Calu3 (cell line): ENCODE measurements at regions of chr3 and their contacts with region 1.

Region 1: DNA sequence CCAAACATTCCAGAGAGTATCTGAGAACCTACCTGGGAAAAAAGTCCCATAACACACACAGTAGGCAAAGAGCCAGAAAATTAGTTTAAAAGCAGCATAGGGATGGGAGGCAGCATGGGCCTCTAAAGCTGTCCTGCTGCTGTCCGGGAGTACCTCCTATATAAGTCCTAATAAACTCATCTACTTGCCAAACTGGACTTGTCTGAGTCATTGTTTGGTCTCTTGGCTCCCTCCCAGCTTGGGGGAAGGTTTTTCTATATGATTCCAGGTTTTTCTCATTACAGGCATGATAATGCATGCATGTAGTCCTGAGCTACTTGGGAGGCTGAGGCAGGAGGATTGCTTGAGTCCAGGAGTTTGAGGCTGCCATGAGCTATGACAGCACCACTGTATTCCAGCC is 17.5 kb upstream of the HACD2 start:
- DNase-seq: peak; percentile 76
- H3K4me3 Mint-ChIP-seq: no peak overlapping the region
- H3K27ac Mint-ChIP-seq: no peak overlapping the region
- H3K4me1 Mint-ChIP-seq: peaks cover 48% of the 10 kb centered on the region
- H3K27me3 Mint-ChIP-seq: no peaks in the 10 kb centered on the region
- CTCF ChIP-seq: no peak

Region 2: GRCh38 chr3:123586131-123586530 is 16.2 kb before region 1 on chr3:
- CTCF ChIA-PET with region 1: interaction called, 4 read pairs
- intact Hi-C with region 1: loop called (anchors 1 kb)
- DNase-seq: peak; percentile 58
- H3K4me3 Mint-ChIP-seq: no peak overlapping the region
- H3K27ac Mint-ChIP-seq: no peak overlapping the region
- H3K4me1 Mint-ChIP-seq: peaks cover 8% of the 10 kb centered on the region
- H3K27me3 Mint-ChIP-seq: no peaks in the 10 kb centered on the region
- CTCF ChIP-seq: no peak